ENCODE measurements at regions of chr1 and their contacts with region 1.

Region 1: GRCh38 chr1:113928941-113929749 is at the start of gene HIPK1:
- H3K4me3 ChIP-seq: peak within 1 kb of the TSS; percentile 96
- H3K27ac ChIP-seq: peak within 1 kb of the TSS; percentile 75
- H3K4me1 ChIP-seq: peaks cover 3% of the 10 kb centered on the region
- CTCF ChIP-seq: peak; percentile 18; the same call in 1 of the 2 replicates

Region 2: GRCh38 chr1:113811888-113812660 is 117.1 kb before region 1 on chr1 and contains the start of gene RSBN1:
- CTCF ChIA-PET with region 1: no interaction called
- POLR2A ChIA-PET with region 1: interaction called, 11 read pairs
- H3K4me3 ChIP-seq: peak within 1 kb of the TSS; percentile 90
- H3K27ac ChIP-seq: peak within 1 kb of the TSS; percentile 51
- H3K4me1 ChIP-seq: peaks cover 2% of the 10 kb centered on the region; the same call in 1 of the 2 replicates
- CTCF ChIP-seq: peak; percentile 57

Region 3: GRCh38 chr1:113904674-113905434 is 24.3 kb before region 1 on chr1 and contains the starts of genes AP4B1 and DCLRE1B:
- CTCF ChIA-PET with region 1: interaction called, 8 read pairs
- POLR2A ChIA-PET with region 1: interaction called, 84 read pairs
- H3K4me3 ChIP-seq: peak within 1 kb of the TSS; percentile 69
- H3K27ac ChIP-seq: peak within 1 kb of the TSS; percentile 75
- H3K4me1 ChIP-seq: no peaks in the 10 kb centered on the region
- CTCF ChIP-seq: peak; percentile 99